ENCODE measurements at regions of chr5 and their contacts with region 1.

Region 1: GRCh38 chr5:164076556-164076955 is 571.1 kb downstream of the MAT2B start:
- DNase-seq: no peak

Region 2: GRCh38 chr5:163106098-163106497 is 970.5 kb before region 1 on chr5:
- intact Hi-C with region 1: no loop called
- DNase-seq: no peak

Region 3: GRCh38 chr5:163619951-163620350 is 456.6 kb before region 1 on chr5:
- intact Hi-C with region 1: loop called in 1 of 2 experiments (anchors 5 kb)
- DNase-seq: no peak

Region 4: DNA sequence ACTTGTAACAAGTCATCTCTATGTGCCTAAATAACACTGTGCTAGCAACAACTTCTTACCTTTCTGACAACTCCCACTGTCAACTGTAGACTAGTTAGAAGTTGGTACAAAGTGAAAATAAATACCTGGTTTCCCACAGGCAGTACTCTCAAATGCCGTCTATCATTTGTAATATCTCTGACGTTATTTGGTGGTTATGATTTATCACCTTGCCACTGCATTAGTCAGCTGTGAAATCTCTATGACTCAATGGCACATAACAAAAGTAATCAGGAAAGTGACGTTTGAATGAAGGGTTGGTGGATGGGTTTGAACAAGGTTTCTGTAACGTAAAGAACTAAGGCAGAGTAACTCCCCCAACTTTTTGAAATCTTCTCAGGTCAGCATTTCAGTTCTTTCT is 21.2 kb after region 1 on chr5:
- intact Hi-C with region 1: no loop called
- DNase-seq: no peak